Right ventricle myocardium superior (tissue), 1 donor: ENCODE measurements at regions of chr4 and their contacts with region 1.

Region 1: DNA sequence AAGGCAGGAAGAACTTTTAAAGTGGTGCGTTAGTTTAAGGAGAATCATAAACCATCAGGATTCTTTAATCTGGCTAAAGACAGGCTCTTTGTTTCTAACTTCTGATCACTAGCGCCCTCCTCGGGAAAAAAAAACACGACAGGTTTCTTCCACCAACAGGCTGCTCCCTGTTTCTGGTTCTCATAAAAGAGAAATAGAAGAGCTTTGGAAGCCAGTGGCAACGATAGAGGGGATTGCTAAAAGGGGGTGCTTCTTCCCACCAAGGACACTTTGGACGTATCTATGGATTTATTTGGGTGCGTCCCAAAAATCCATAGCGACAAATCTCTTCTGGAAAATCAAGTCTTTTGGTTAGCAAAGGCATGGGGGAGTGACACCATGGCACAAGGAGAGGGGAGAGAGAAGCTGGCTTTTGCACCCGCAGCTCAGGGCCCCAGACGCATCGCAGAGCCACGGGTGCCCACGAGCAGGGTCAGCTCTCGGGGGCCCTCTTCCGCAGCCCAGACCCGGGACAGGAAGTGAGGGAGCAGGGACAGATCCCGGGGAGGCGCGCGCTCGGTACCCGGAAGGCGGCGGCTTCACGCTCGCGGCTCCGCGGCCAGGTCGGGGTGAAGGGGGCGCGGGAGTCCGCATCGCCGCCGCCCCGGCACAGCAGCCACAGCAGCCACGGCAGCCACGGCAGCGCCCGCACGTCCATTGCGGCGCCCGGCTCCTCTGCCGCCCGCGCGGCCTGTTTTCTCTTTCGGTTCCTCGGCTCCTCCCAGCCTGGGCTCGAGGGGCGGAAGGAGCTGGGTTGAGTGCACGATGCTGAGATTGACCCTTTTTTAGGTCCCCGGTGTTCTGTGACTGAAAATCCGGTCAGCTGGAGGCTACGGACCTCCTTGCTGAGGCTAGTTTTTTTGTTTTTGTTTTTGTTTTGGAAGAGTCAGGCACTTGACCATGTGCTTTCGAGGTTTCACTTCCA is at the start of gene CTSO:
- DNase-seq: peak; percentile 86
- ATAC-seq: peak; percentile 98
- total RNA-seq, gene CTSO: 6.2 TPM

Region 2: DNA sequence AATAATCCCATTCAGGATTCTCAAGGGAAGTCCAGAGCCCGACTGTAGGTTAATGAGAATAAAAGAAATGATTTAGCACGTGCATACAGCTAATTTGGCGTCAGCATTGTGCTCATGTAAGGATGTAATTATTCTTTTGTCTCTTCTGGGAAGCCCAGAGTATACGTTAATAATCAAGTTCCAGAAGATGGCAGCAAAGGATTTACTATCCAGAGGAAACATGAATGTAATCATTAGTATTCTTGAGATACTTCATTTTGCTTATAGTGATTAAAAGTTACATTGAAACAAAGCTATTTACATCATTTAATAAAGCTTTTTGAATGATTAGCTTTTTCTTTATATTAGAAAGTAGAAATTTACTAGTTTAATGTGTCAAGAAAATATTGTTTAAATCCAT is 549.5 kb before region 1 on chr4:
- intact Hi-C with region 1: loop called (anchors 10 kb)
- DNase-seq: no peak
- ATAC-seq: peak; percentile 84

Region 3: GRCh38 chr4:155809835-155810234 is 143.6 kb before region 1 on chr4:
- intact Hi-C with region 1: loop called (anchors 5 kb)
- DNase-seq: no peak
- ATAC-seq: peak; percentile 86

Region 4: GRCh38 chr4:156195914-156196313 is 242.5 kb after region 1 on chr4:
- intact Hi-C with region 1: no loop called
- DNase-seq: no peak
- ATAC-seq: no peak